Caco-2 (cell line): ENCODE measurements at regions of chr7 and their contacts with region 1.

Region 1: GRCh38 chr7:77798394-77799077 is at the starts of genes PHTF2 and TMEM60:
- DNase-seq: peak; percentile 99
- H3K4me3 ChIP-seq: peak within 1 kb of the TSS; percentile 97
- H3K4me3 Mint-ChIP-seq: peak within 1 kb of the TSS; percentile 99
- H3K27ac Mint-ChIP-seq: peak within 1 kb of the TSS; percentile 93
- H3K4me1 ChIP-seq: peaks cover 19% of the 10 kb centered on the region
- H3K4me1 Mint-ChIP-seq: peaks cover 27% of the 10 kb centered on the region
- H3K27me3 ChIP-seq: no peaks in the 10 kb centered on the region
- H3K27me3 Mint-ChIP-seq: no peaks in the 10 kb centered on the region
- CTCF ChIP-seq: peak; percentile 54 to 67
- total RNA-seq, gene PHTF2: 33.8 and 36.9 TPM in 2 replicates
- total RNA-seq, gene TMEM60: 18.9 and 19.6 TPM in 2 replicates

Region 2: GRCh38 chr7:77765906-77766800 is 32.4 kb before region 1 on chr7:
- CTCF ChIA-PET with region 1: no interaction called
- POLR2A ChIA-PET with region 1: no interaction called
- intact Hi-C with region 1: loop called (anchors 2 kb)
- DNase-seq: peak in 1 of 2 experiments; percentile 26
- H3K4me3 ChIP-seq: no peak overlapping the region
- H3K4me3 Mint-ChIP-seq: peak overlapping the region; percentile 29
- H3K27ac Mint-ChIP-seq: peak overlapping the region; percentile 76
- H3K4me1 ChIP-seq: peaks cover 30% of the 10 kb centered on the region
- H3K4me1 Mint-ChIP-seq: peaks cover 14% of the 10 kb centered on the region
- H3K27me3 ChIP-seq: no peaks in the 10 kb centered on the region
- H3K27me3 Mint-ChIP-seq: no peaks in the 10 kb centered on the region
- CTCF ChIP-seq: no peak

Region 3: DNA sequence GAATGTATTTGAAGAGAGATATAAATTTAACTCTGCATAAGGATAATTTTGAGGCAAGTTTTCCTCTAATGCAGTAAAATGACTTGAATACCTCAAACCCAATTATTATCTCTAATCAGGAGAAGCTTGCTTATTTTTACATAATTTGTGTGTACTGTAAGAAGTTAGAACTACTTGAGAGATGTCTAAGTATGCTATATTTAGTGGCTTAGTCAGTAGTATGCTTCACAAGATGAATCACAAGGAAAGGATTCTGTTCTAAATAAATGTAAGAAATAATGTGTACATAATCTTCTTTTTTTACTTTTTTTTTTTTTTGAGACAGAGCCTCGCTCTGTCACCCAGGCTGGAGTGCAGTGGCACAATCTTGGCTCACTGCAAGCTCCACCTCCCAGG is 13.8 kb after region 1 on chr7:
- CTCF ChIA-PET with region 1: interaction called, 3 read pairs
- POLR2A ChIA-PET with region 1: interaction called, 7 read pairs
- intact Hi-C with region 1: loop called (anchors 1 kb)
- DNase-seq: no peak
- H3K4me3 ChIP-seq: no peak overlapping the region
- H3K4me3 Mint-ChIP-seq: peak overlapping the region; percentile 60
- H3K27ac Mint-ChIP-seq: peak overlapping the region; percentile 69
- H3K4me1 ChIP-seq: peaks cover 39% of the 10 kb centered on the region
- H3K4me1 Mint-ChIP-seq: peaks cover 23% of the 10 kb centered on the region
- H3K27me3 ChIP-seq: no peaks in the 10 kb centered on the region
- H3K27me3 Mint-ChIP-seq: no peaks in the 10 kb centered on the region
- CTCF ChIP-seq: no peak

Region 4: GRCh38 chr7:77837290-77837689 is 38.8 kb after region 1 on chr7:
- CTCF ChIA-PET with region 1: no interaction called
- POLR2A ChIA-PET with region 1: interaction called, 3 read pairs
- intact Hi-C with region 1: loop called (anchors 5 kb)
- DNase-seq: no peak
- H3K4me3 ChIP-seq: no peak overlapping the region
- H3K4me3 Mint-ChIP-seq: no peak overlapping the region
- H3K27ac Mint-ChIP-seq: no peak overlapping the region
- H3K4me1 ChIP-seq: peaks cover 33% of the 10 kb centered on the region
- H3K4me1 Mint-ChIP-seq: peaks cover 25% of the 10 kb centered on the region
- H3K27me3 ChIP-seq: no peaks in the 10 kb centered on the region
- H3K27me3 Mint-ChIP-seq: no peaks in the 10 kb centered on the region
- CTCF ChIP-seq: no peak

Region 5: GRCh38 chr7:77866786-77867536 is 68.4 kb after region 1 on chr7:
- CTCF ChIA-PET with region 1: interaction called, 6 read pairs
- POLR2A ChIA-PET with region 1: interaction called, 4 read pairs
- intact Hi-C with region 1: loop called (anchors 2 kb)
- DNase-seq: peak in 1 of 2 experiments; percentile 12
- H3K4me3 ChIP-seq: no peak overlapping the region
- H3K4me3 Mint-ChIP-seq: no peak overlapping the region
- H3K27ac Mint-ChIP-seq: peak overlapping the region; percentile 72
- H3K4me1 ChIP-seq: peaks cover 32% of the 10 kb centered on the region
- H3K4me1 Mint-ChIP-seq: peaks cover 29% of the 10 kb centered on the region
- H3K27me3 ChIP-seq: no peaks in the 10 kb centered on the region
- H3K27me3 Mint-ChIP-seq: no peaks in the 10 kb centered on the region
- CTCF ChIP-seq: no peak

Region 6: DNA sequence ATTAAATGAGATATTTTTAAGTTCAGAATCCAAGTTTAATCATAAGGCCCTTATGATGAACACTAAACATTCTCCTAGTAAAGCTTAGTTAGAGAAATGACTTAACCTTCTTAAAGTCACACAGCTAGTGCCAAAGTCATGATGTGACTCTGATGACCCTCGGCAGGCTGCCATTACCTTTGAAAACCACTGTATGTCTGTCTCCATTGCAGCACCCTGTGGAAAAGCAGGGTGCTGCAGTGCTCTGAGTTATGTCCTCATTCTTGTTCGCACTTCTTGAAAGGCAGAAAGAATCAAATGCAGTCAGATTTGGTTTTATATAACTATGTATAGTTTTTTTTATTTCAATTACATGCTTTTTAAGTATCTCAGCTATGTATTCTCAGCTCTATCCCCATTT is 105.1 kb after region 1 on chr7:
- CTCF ChIA-PET with region 1: interaction called, 5 read pairs
- POLR2A ChIA-PET with region 1: no interaction called
- intact Hi-C with region 1: loop called (anchors 2 kb)
- DNase-seq: peak; percentile 35 to 44
- H3K4me3 ChIP-seq: no peak overlapping the region
- H3K4me3 Mint-ChIP-seq: no peak overlapping the region
- H3K27ac Mint-ChIP-seq: no peak overlapping the region
- H3K4me1 ChIP-seq: 0 out of 2 replicates have a peak, but pooled peaks cover 4% of the 10 kb centered on the region
- H3K4me1 Mint-ChIP-seq: no peaks in the 10 kb centered on the region
- H3K27me3 ChIP-seq: no peaks in the 10 kb centered on the region
- H3K27me3 Mint-ChIP-seq: no peaks in the 10 kb centered on the region
- CTCF ChIP-seq: peak; percentile 48 to 71

Region 7: GRCh38 chr7:77940647-77941046 is 142.1 kb after region 1 on chr7:
- CTCF ChIA-PET with region 1: no interaction called
- POLR2A ChIA-PET with region 1: no interaction called
- intact Hi-C with region 1: loop called (anchors 2 kb)
- DNase-seq: peak in 1 of 2 experiments; percentile 31
- H3K4me3 ChIP-seq: no peak overlapping the region
- H3K4me3 Mint-ChIP-seq: no peak overlapping the region
- H3K27ac Mint-ChIP-seq: no peak overlapping the region
- H3K4me1 ChIP-seq: peaks cover 10% of the 10 kb centered on the region
- H3K4me1 Mint-ChIP-seq: peaks cover 21% of the 10 kb centered on the region
- H3K27me3 ChIP-seq: no peaks in the 10 kb centered on the region
- H3K27me3 Mint-ChIP-seq: no peaks in the 10 kb centered on the region
- CTCF ChIP-seq: peak; percentile 42 to 72